Activated B cell treated with CpG ODN at 0.5 μM for 24 hours (primary cell): ENCODE measurements at regions of chr18 and their contacts with region 1.

Region 1: GRCh38 chr18:57004366-57005121 is 142.3 kb upstream of the BOD1L2 start:
- DNase-seq: no peak
- ATAC-seq: peak; percentile 89
- H3K4me3 Mint-ChIP-seq: no peak overlapping the region
- H3K27ac Mint-ChIP-seq: peak overlapping the region; percentile 56
- H3K4me1 Mint-ChIP-seq: peaks cover 16% of the 10 kb centered on the region
- H3K27me3 Mint-ChIP-seq: no peaks in the 10 kb centered on the region
- CTCF ChIP-seq: no peak

Region 2: DNA sequence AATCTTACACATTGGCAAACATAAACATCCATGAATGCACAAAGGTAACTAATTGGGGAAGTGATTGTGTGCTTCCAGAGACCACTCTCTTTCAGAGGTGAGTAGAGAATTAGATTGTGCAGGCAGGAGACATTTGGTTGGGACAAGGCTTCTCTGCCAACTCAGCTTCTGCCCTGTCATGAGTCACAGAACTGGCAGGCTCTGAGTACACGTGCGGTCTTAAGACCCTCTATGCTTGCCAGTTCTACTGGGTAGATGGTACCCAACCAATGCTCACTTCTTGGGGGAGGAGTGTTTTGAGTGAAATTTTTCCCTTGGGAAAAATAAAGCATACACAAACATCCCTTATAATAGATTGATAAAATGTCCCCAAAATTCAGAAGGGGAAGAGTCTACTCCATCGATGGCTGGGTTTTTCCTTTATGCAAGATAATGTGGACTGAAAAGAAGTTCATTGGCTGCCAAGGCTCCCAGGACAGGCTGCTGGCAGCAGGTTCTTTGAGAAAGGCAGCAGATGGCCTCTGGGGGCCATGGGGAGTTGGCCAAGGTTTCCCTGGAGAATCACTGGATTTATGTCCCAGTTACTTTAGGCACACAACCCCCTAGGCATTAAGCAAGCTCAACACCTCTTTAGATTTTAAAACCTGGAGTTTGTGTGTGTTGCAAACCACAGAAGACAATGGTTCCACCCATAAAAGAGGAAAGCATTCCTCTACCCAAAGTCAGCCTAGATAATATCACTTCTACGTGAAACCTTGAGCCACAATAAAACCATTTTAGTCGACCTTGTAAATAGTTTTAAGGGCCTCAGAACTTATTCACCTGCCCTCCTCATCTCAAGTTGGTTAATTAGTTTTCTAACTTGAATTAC is 783.1 kb before region 1 on chr18:
- CTCF ChIA-PET with region 1: no interaction called
- POLR2A ChIA-PET with region 1: no interaction called
- intact Hi-C with region 1: no loop called
- DNase-seq: no peak
- ATAC-seq: no peak
- H3K4me3 Mint-ChIP-seq: no peak overlapping the region
- H3K27ac Mint-ChIP-seq: no peak overlapping the region
- H3K4me1 Mint-ChIP-seq: no peaks in the 10 kb centered on the region
- H3K27me3 Mint-ChIP-seq: no peaks in the 10 kb centered on the region
- CTCF ChIP-seq: no peak

Region 3: GRCh38 chr18:57023275-57023882 is 18.8 kb after region 1 on chr18:
- CTCF ChIA-PET with region 1: no interaction called
- POLR2A ChIA-PET with region 1: no interaction called
- intact Hi-C with region 1: loop called (anchors 1 kb)
- DNase-seq: no peak
- ATAC-seq: peak; percentile 74
- H3K4me3 Mint-ChIP-seq: no peak overlapping the region
- H3K27ac Mint-ChIP-seq: peak overlapping the region; percentile 63
- H3K4me1 Mint-ChIP-seq: peaks cover 24% of the 10 kb centered on the region
- H3K27me3 Mint-ChIP-seq: no peaks in the 10 kb centered on the region
- CTCF ChIP-seq: no peak